Right ventricle myocardium superior (tissue), 1 donor: ENCODE measurements at regions of chr16 and their contacts with region 1.

Region 1: DNA sequence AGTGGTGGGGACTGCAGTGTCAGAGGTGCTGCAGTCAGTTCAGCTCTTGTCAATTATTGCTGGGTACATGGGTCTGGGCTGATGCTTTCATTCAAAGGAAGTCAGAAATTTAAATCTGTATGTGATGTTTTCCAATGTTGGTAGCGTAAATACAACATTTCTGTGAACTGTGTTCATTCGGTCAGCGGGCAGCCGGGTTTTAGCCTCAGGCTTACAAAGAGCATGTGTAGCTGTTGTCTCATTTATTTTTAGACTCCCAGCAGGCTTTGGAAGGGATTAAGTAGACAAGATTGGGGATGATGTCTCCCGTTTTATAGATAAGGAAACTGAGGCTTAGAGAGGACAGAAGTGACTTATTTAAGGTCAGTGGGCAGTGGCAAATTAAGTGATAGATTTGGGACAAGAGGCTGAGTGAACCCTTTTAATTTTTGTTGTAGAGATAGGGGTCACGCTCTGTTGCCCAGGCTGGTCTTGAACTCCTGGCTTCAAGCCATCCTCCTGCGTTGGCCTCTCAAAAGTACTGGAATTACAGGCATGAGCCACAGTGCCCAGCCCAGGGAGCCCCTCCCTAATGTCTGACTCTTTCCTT is 8.1 kb downstream of the AQP8 start:
- DNase-seq: no peak
- ATAC-seq: no peak

Region 2: GRCh38 chr16:25051406-25052150 is 173.2 kb before region 1 on chr16:
- intact Hi-C with region 1: loop called (anchors 10 kb)
- DNase-seq: no peak
- ATAC-seq: peak; percentile 66

Region 3: DNA sequence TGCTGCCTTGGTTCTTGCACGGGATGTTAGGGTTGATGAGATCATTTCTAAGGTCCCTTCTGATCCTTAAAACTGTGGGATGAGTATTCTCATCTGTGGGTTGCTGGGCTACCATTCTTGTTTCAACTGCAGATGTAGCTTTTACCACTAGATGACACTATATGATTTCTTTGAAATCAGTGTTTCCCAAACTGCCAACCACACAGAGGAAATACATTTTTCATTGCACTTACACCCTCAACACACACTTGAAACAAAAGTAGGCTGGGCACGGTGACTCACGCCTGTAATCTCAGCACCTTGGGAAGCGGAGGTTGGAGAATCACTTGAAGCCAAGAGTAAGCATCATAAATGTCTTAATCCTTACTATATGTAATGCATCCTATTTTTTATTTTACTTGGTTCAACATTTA is 98.0 kb before region 1 on chr16:
- intact Hi-C with region 1: loop called (anchors 10 kb)
- DNase-seq: no peak
- ATAC-seq: peak; percentile 52